ENCODE measurements at regions of chr1 and their contacts with region 1.

Region 1: DNA sequence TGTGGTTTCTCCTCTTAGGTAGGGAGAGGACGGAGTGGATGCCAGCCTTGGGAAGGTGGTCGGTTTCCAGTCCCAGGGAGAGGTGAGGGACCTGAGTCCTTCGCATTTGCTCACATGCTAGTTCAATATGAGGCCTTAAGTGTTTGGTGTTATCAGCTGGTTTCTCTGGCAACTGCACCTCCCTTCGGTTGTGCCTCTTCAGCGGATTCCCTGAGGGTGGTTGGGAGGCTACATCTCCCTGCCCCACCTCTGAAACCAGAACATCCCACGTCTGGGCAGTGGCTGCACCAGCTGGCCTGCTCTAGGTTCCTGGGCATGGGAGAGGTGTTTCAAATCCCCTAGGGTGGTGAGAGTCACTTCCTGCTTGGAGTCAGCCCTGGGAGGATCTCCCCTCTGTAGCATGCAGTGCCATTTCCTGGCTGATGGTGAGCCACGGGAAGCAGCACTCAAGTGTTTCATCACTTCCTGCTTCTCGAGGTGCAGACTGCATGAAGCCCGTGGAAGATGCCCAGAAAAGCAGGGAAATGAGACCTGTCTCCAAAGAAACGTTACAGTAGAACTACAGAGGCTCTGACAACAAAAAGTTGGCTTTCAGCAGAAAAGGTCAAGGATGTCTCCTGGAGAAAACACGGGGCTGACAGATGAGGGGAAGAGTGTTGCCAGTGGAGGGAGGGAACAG is 4.5 kb downstream of the TMEM125 start:
- DNase-seq: peak; percentile 73

Region 2: GRCh38 chr1:43251024-43251423 is 23.2 kb before region 1 on chr1:
- intact Hi-C with region 1: loop called in 1 of 2 experiments (anchors 1 kb)
- DNase-seq: peak; percentile 23

Region 3: GRCh38 chr1:43329995-43330751 is 55.9 kb after region 1 on chr1:
- intact Hi-C with region 1: loop called in 1 of 2 experiments (anchors 5 kb)
- DNase-seq: peak; percentile 92

Measured in posterior vena cava (tissue), 2 donors.